Endothelial cell of umbilical vein (primary cell): ENCODE measurements at regions of chr4 and their contacts with region 1.

Region 1: GRCh38 chr4:112099701-112100297 is 45.5 kb upstream of the FAM241A start:
- DNase-seq: peak; percentile 80
- H3K4me3 ChIP-seq: no peak overlapping the region
- H3K27ac ChIP-seq: no peak overlapping the region
- H3K4me1 ChIP-seq: peaks cover 10% of the 10 kb centered on the region
- H3K27me3 ChIP-seq: no peaks in the 10 kb centered on the region
- CTCF ChIP-seq: peak; percentile 28 to 45
- POLR2A ChIP-seq: no peak

Region 2: DNA sequence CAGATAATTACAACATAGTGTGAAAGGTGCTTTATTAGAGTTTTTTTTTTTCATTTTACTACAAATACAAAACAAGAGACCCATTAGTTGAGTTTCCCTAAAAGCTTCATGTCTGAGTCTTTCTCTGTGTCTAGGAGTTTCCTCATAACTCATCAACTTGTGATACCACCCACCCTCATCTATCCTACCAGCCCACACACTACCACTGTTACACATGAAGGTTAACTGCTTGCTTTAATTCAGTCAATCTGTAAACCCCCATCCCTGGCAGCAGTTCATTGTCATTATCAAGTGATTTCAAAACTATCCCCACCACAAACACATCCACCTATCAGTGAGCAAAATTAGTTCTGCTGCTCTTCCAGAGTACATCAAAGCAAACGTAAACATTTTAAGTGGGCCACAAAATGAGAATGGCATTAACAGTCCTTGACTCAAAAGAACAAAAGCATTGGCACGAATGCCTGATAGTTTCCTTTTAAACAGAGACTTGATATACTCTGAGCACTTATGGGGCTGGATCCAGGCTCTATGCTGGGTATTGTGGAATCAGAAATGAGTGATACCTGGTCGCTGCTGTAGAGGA is 286.2 kb before region 1 on chr4:
- CTCF ChIA-PET with region 1: no interaction called
- POLR2A ChIA-PET with region 1: no interaction called
- dilution Hi-C with region 1: no loop called
- intact Hi-C with region 1: no loop called
- DNase-seq: no peak
- H3K4me3 ChIP-seq: no peak overlapping the region
- H3K27ac ChIP-seq: no peak overlapping the region
- H3K4me1 ChIP-seq: no peaks in the 10 kb centered on the region
- H3K27me3 ChIP-seq: no peaks in the 10 kb centered on the region
- CTCF ChIP-seq: no peak
- POLR2A ChIP-seq: no peak

Region 3: GRCh38 chr4:112145326-112145819 is 45.6 kb after region 1 on chr4 and contains the start of gene FAM241A:
- CTCF ChIA-PET with region 1: interaction called, 35 read pairs
- POLR2A ChIA-PET with region 1: no interaction called
- dilution Hi-C with region 1: no loop called
- intact Hi-C with region 1: loop called (anchors 2 kb)
- DNase-seq: peak; percentile 81
- H3K4me3 ChIP-seq: peak within 1 kb of the TSS; percentile 88 to 96 (median 91)
- H3K27ac ChIP-seq: peak within 1 kb of the TSS; percentile 77
- H3K4me1 ChIP-seq: peaks cover 24% of the 10 kb centered on the region
- H3K27me3 ChIP-seq: no peaks in the 10 kb centered on the region
- CTCF ChIP-seq: no peak
- POLR2A ChIP-seq: peak; percentile 92
- total RNA-seq, gene FAM241A: 8.3 and 9.1 TPM in 2 replicates

Region 4: GRCh38 chr4:112214390-112215264 is 114.8 kb after region 1 on chr4:
- CTCF ChIA-PET with region 1: interaction called, 22 read pairs
- POLR2A ChIA-PET with region 1: no interaction called
- dilution Hi-C with region 1: no loop called
- intact Hi-C with region 1: no loop called
- DNase-seq: peak; percentile 34
- H3K4me3 ChIP-seq: no peak overlapping the region
- H3K27ac ChIP-seq: no peak overlapping the region
- H3K4me1 ChIP-seq: no peaks in the 10 kb centered on the region
- H3K27me3 ChIP-seq: no peaks in the 10 kb centered on the region
- CTCF ChIP-seq: peak in 1 of 2 donors; percentile 27
- POLR2A ChIP-seq: no peak

Region 5: GRCh38 chr4:112321776-112322684 is 222.2 kb after region 1 on chr4:
- CTCF ChIA-PET with region 1: interaction called, 7 read pairs
- POLR2A ChIA-PET with region 1: no interaction called
- dilution Hi-C with region 1: no loop called
- intact Hi-C with region 1: loop called (anchors 1 kb)
- DNase-seq: peak; percentile 81
- H3K4me3 ChIP-seq: no peak overlapping the region
- H3K27ac ChIP-seq: no peak overlapping the region
- H3K4me1 ChIP-seq: peaks cover 4% of the 10 kb centered on the region
- H3K27me3 ChIP-seq: no peaks in the 10 kb centered on the region
- CTCF ChIP-seq: peak; percentile 71 to 86
- POLR2A ChIP-seq: no peak

Region 6: DNA sequence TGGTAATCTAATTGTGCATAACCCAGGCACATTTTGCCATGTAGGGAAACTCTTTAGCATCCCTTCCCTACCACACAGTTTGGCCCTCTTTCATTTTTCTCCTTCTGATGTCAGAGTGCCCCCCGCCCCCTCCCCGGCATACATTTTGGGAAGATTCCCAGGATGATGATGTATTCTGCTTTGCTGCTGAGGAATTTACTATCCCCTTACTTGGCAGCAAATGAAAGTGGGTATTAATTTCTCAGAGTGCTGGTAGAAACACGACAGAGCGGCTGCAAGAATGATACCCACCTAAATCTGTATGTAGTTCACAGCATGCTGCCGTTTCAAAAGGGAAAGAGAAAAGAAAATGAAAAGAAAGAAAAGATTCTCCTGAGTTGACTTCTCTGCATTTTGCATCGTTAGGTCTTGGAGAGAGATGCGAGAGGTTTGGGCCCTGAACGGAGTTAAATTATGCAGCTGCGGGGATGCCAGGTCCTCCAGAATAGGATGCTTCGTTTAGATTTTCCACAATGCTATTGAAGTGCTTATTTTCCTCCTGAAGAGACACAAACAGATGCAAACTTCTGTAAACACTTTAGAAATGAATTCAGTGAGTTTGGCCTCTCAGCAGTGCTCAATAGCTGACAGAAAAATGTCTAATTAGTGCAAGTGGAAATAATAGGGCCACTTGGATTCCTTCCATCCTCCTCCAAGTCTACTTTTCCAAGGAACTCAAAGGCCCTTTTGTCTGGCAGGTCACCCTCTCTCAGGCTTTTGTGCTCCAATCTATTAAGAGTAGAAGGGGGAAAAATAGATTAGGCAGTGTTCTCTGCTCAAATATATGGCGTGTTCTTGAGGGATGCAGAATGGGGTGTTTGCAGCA is 303.5 kb after region 1 on chr4:
- CTCF ChIA-PET with region 1: no interaction called
- POLR2A ChIA-PET with region 1: no interaction called
- dilution Hi-C with region 1: no loop called
- intact Hi-C with region 1: no loop called
- DNase-seq: no peak
- H3K4me3 ChIP-seq: no peak overlapping the region
- H3K27ac ChIP-seq: no peak overlapping the region
- H3K4me1 ChIP-seq: no peaks in the 10 kb centered on the region
- H3K27me3 ChIP-seq: no peaks in the 10 kb centered on the region
- CTCF ChIP-seq: no peak
- POLR2A ChIP-seq: no peak

Region 7: GRCh38 chr4:112604589-112604988 is 504.8 kb after region 1 on chr4:
- CTCF ChIA-PET with region 1: interaction called, 6 read pairs
- POLR2A ChIA-PET with region 1: no interaction called
- dilution Hi-C with region 1: no loop called
- intact Hi-C with region 1: loop called (anchors 2 kb)
- DNase-seq: peak; percentile 69
- H3K4me3 ChIP-seq: no peak overlapping the region
- H3K27ac ChIP-seq: no peak overlapping the region
- H3K4me1 ChIP-seq: no peaks in the 10 kb centered on the region
- H3K27me3 ChIP-seq: no peaks in the 10 kb centered on the region
- CTCF ChIP-seq: peak; percentile 54 to 67
- POLR2A ChIP-seq: no peak